K562 (cell line): ENCODE measurements at regions of chr15 and their contacts with region 1.

Region 1: DNA sequence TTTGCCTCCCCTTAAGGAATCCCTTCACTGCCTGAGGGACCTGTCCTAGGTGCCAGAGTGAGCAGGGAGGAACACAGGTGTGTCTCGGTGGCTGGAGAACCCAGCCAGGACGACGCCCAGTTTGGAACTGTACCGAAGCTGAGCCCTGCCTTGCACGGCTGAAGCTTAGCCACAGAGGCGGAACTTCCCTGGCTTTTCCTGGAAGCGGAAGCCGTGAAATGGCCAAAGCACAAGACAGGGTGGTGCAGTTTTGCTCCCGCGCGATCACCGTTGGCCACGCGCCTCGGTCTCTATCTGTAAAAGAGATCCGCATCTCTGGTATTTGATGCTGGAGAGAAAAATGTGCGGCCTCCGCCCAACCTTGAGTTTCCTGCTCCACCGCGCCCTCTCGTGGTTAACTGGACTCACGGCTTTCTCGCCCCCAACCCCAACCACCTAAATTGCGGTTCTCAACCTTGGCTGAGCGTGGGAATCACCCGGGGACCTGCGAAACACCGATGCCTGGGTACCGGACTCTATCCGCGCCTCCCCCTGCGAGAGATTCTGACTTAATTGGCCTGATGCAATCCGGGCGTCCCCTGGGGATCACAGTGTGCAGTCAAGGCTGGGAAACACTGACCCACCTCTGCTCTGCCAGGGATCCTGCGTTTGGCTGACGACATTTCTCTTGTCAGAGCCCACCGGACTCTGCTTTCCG is 70.7 kb upstream of the ABHD2 start:
- DNase-seq: peak; percentile 76 to 90 (median 78)
- ATAC-seq: peak; percentile 96
- H3K4me3 ChIP-seq: 0 out of 2 replicates have a peak overlapping the region, but pooled peaks have one; percentile 9
- H3K27ac ChIP-seq: no peak overlapping the region
- H3K4me1 ChIP-seq: peaks cover 5 to 15% of the 10 kb centered on the region in 2 experiments; a peak in 3 of 5 replicates
- H3K27me3 ChIP-seq: no peaks in the 10 kb centered on the region
- CTCF ChIP-seq: peak; percentile 89 to 96 (median 91)
- EP300 ChIP-seq: 0 out of 2 replicates have a peak, but pooled peaks have one; percentile 19
- POLR2A ChIP-seq: no peak
- RAD21 ChIP-seq: peak; percentile 86 to 93

Region 2: GRCh38 chr15:88897456-88898194 is 119.9 kb before region 1 on chr15:
- CTCF ChIA-PET with region 1: interaction called, 10 read pairs
- POLR2A ChIA-PET with region 1: interaction called, 3 read pairs
- in situ Hi-C with region 1: no loop called
- intact Hi-C with region 1: no loop called
- DNase-seq: peak; percentile 83 to 91 (median 84)
- ATAC-seq: peak; percentile 98
- H3K4me3 ChIP-seq: no peak overlapping the region
- H3K27ac ChIP-seq: no peak overlapping the region
- H3K4me1 ChIP-seq: peaks cover 9 to 43% of the 10 kb centered on the region in 2 experiments; a peak in 4 of 5 replicates
- H3K27me3 ChIP-seq: no peaks in the 10 kb centered on the region
- CTCF ChIP-seq: peak; percentile 67 to 74 (median 73)
- EP300 ChIP-seq: no peak
- POLR2A ChIP-seq: no peak
- RAD21 ChIP-seq: peak; percentile 38 to 52; a peak in 3 of 4 replicates

Region 3: DNA sequence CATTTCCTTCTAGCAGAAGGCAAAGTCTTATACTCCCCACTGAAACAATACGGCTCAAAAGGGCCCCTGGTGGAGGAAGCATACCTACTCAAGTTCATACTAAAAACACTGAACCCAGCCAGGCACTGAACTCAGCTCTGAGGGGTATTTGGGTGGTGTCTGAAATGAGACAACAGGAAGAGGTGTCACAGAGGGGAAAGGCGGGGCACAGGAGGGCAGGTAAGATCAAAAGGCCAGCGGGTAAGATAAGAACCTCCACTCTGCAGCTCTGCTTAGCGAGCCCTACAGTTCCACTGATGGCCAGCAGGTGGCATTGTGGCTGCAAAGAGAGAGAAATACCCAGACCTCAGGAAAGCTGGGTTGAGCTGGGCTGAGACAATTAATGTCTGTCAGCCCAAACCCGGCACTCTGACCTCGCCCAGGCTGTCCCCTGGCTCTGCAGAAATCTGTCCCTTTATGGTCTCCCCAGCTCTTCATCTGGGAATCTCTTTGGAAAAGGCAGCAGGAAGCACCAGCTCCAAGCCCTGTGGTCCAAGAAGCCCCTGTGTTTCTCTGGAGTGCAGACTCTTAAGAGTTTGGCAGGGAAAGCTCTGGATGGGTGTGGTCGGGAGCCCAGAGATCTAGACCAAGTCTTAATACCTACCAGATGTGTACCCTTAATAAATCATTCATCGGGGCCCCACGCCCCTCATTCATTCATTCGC is 112.7 kb before region 1 on chr15:
- CTCF ChIA-PET with region 1: interaction called, 13 read pairs
- POLR2A ChIA-PET with region 1: interaction called, 3 read pairs
- in situ Hi-C with region 1: no loop called
- intact Hi-C with region 1: loop called (anchors 1 kb)
- DNase-seq: peak; percentile 85 to 91 (median 88)
- ATAC-seq: peak; percentile 93
- H3K4me3 ChIP-seq: no peak overlapping the region
- H3K27ac ChIP-seq: 0 out of 3 replicates have a peak overlapping the region, but pooled peaks have one; percentile 25
- H3K4me1 ChIP-seq: peaks cover 17 to 26% of the 10 kb centered on the region in 2 experiments; a peak in 4 of 5 replicates
- H3K27me3 ChIP-seq: no peaks in the 10 kb centered on the region
- CTCF ChIP-seq: peak; percentile 94 to 98 (median 94)
- EP300 ChIP-seq: peak; percentile 13; the same call in 1 of the 2 replicates
- POLR2A ChIP-seq: no peak
- RAD21 ChIP-seq: peak; percentile 94 to 95

Region 4: DNA sequence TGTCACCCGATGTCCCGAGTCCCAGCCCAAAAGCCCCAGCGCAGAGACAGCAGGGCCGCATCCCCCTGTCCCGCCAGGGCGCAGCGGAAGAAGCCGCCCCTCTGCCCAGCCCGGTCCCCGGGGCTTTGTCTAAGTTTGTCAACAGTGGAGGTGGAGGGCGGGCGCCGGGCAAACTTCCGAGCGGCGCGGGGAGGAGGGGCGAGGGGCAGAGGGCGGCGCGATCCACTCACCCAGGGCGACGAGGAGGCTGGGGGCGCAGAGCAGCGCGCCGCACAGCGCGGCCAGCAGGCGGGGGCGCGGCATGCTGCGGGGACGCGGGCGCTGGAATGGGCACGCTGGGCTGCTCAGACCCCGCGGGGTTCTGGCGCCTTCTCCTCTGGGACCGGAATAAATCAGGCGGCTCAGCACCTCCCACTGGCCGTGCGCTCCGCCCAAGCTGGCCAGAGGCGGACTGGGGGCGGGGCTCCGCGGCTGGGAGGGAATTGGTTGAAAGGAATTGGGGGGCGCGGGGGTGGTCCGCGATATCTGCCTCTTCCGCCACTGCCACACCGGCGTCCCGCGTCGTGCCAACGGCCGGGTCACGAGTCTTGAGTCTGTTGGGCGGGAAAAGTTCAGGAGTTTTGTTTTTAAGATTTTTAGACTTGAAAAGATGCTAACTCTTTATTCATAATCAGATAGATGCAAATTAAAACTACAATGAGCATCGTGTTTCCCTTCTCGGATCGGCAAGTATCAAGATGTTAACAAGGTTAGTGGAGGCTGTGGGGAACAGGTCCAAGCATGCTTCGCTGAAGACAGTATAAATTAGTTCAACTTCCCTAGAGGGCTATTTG is 104.3 kb before region 1 on chr15 and contains the start of gene MFGE8:
- CTCF ChIA-PET with region 1: interaction called, 3 read pairs
- POLR2A ChIA-PET with region 1: no interaction called
- in situ Hi-C with region 1: loop called (anchors 5 kb)
- intact Hi-C with region 1: no loop called
- DNase-seq: peak; percentile 85 to 90 (median 87)
- ATAC-seq: peak; percentile 93
- H3K4me3 ChIP-seq: peak within 1 kb of the TSS; percentile 75
- H3K27ac ChIP-seq: peak within 1 kb of the TSS; percentile 74
- H3K4me1 ChIP-seq: peaks cover 33 to 38% of the 10 kb centered on the region in 2 experiments
- H3K27me3 ChIP-seq: no peaks in the 10 kb centered on the region
- CTCF ChIP-seq: peak in 2 of 3 experiments; percentile 15; a peak in 1 of 6 replicates
- EP300 ChIP-seq: no peak
- POLR2A ChIP-seq: peak; percentile 81
- RAD21 ChIP-seq: no peak
- polyA plus RNA-seq, gene MFGE8: 2.3 to 3.1 TPM

Region 5: DNA sequence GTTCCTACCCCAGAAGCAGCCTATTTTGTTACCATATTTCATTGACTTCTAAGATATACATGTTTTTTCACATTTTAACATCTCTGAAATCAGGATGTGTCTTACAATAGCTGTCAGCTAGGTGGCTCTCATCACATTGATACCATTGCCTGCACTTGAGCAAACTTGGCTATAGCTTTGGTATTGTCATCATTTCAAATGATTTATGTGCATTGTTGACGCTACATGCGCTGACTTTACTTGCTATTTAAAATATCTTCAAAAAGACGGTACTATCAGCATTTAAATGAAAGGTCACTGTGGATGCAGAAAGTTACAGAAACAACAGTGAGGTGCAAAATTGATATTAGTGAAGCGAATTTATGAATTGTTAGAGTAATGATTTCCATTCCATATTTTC is 16.8 kb after region 1 on chr15:
- CTCF ChIA-PET with region 1: no interaction called
- POLR2A ChIA-PET with region 1: interaction called, 11 read pairs
- in situ Hi-C with region 1: no loop called
- intact Hi-C with region 1: no loop called
- DNase-seq: peak in 1 of 4 experiments; percentile 47
- ATAC-seq: peak; percentile 77
- H3K4me3 ChIP-seq: no peak overlapping the region
- H3K27ac ChIP-seq: no peak overlapping the region
- H3K4me1 ChIP-seq: peaks cover 0 to 8% of the 10 kb centered on the region in 2 experiments; a peak in 1 of 5 replicates
- H3K27me3 ChIP-seq: peaks cover 6 to 10% of the 10 kb centered on the region in 2 experiments; a peak in 2 of 5 replicates
- CTCF ChIP-seq: peak; percentile 45 to 66 (median 46); a peak in 5 of 6 replicates
- EP300 ChIP-seq: no peak
- POLR2A ChIP-seq: no peak
- RAD21 ChIP-seq: peak; percentile 44 to 72

Region 6: GRCh38 chr15:89282631-89283030 is 265.1 kb after region 1 on chr15:
- CTCF ChIA-PET with region 1: no interaction called
- POLR2A ChIA-PET with region 1: no interaction called
- in situ Hi-C with region 1: no loop called
- intact Hi-C with region 1: no loop called
- DNase-seq: no peak
- ATAC-seq: no peak
- H3K4me3 ChIP-seq: no peak overlapping the region
- H3K27ac ChIP-seq: no peak overlapping the region
- H3K4me1 ChIP-seq: no peaks in the 10 kb centered on the region
- H3K27me3 ChIP-seq: no peaks in the 10 kb centered on the region
- CTCF ChIP-seq: no peak
- EP300 ChIP-seq: no peak
- POLR2A ChIP-seq: no peak
- RAD21 ChIP-seq: no peak